ENCODE measurements at regions of chr22 and their contacts with region 1.

Region 1: GRCh38 chr22:33302049-33302545 is 243.9 kb upstream of the SYN3 start:
- DNase-seq: peak; percentile 91
- H3K4me3 ChIP-seq: peak overlapping the region; percentile 10
- H3K27ac ChIP-seq: peak overlapping the region; percentile 100
- H3K4me1 ChIP-seq: peaks cover 65% of the 10 kb centered on the region
- CTCF ChIP-seq: peak; percentile 99

Region 2: DNA sequence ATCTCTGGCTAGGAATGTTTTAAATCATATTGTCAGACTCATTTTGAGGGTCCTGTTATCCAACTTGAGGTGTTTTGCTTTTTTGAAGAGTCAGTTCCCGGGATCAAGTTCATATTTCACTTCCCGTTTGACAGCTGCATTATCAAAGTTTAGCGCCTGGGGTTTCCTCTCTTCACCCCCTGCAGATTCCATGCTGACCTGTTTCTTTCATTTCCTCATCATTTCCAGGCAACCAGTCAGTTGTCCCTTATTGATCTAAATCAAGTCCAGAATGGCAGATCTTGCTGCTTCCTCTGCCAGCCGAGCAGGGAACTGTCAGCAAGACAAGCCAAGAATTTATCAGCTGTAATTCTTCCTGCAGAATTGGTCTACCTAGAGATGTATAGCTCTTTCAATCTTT is 46.3 kb before region 1 on chr22:
- CTCF ChIA-PET with region 1: interaction called, 3 read pairs
- POLR2A ChIA-PET with region 1: interaction called, 11 read pairs
- intact Hi-C with region 1: no loop called
- DNase-seq: peak; percentile 62
- H3K4me3 ChIP-seq: peak overlapping the region; percentile 35
- H3K27ac ChIP-seq: peak overlapping the region; percentile 55
- H3K4me1 ChIP-seq: peaks cover 55% of the 10 kb centered on the region
- CTCF ChIP-seq: no peak

Region 3: DNA sequence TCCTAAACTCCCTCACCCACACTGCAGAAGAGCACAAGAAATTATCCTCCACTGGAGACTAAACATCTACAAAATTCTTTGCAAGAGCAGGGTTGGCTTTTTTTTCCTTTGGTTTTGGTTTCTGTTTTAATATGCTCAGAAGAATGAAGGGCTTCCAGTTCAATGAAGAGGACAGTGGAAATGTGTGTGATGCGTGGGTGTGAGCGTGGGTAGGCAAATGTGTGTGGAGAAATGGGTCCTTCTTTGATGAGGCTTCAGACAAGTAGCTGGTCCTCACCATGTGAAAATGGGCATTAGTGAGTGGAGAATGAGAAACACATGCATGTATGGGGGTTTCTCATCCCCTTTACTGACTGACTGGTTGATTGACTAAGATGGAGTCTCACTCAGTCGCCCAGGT is 19.4 kb after region 1 on chr22:
- CTCF ChIA-PET with region 1: interaction called, 13 read pairs
- POLR2A ChIA-PET with region 1: interaction called, 12 read pairs
- intact Hi-C with region 1: loop called (anchors 2 kb)
- DNase-seq: no peak
- H3K4me3 ChIP-seq: peak overlapping the region; percentile 29
- H3K27ac ChIP-seq: peak overlapping the region; percentile 74
- H3K4me1 ChIP-seq: peaks cover 66% of the 10 kb centered on the region
- CTCF ChIP-seq: no peak

Region 4: GRCh38 chr22:33467620-33468095 is 165.6 kb after region 1 on chr22:
- CTCF ChIA-PET with region 1: no interaction called
- POLR2A ChIA-PET with region 1: no interaction called
- intact Hi-C with region 1: no loop called
- DNase-seq: no peak
- H3K4me3 ChIP-seq: no peak overlapping the region
- H3K27ac ChIP-seq: no peak overlapping the region
- H3K4me1 ChIP-seq: peaks cover 5% of the 10 kb centered on the region
- CTCF ChIP-seq: no peak

Region 5: DNA sequence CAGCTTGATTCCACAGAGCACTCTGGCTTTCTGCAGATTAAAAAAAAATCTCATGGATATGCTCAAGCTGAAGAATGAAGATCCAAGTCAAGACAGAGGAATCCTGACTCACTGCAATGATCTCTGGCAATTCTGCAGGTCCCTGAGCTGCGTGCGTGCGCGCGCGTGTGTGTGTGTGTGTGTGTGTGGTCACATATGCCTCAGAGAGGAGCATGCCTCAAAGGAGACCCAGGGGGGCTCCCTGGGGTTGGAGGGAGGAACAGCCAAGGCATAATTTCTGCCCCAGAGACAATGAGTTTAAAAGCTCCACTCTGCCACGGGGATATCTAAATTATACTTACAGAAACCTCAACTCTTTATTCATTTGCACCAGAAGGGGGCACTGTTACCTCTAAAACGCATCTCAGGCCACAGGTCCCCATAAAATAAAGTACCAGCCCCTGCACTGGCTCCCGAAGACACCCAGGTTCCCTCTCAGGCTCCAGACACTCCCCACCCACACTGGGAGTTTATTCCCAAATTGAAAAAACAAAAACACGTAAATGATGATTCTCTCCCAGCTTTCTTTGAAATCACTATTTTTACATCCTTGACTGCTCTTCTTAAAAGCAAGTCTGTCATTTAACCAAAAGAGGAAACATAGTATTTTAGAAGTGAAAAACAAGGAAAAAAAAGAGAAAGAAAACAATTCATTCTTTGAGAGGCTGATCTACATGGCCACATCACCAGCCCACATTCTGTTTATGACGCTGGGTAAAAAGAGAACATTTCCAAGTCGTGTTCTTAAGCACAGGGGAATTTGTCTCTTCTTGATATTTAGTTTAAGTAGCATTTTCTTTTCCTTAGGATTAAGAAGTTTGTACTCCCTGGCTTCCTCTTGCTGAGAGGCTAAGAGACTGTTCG is 217.2 kb after region 1 on chr22:
- CTCF ChIA-PET with region 1: interaction called, 10 read pairs
- POLR2A ChIA-PET with region 1: interaction called, 5 read pairs
- intact Hi-C with region 1: loop called (anchors 1 kb)
- DNase-seq: peak; percentile 84
- H3K4me3 ChIP-seq: no peak overlapping the region
- H3K27ac ChIP-seq: peak overlapping the region; percentile 57
- H3K4me1 ChIP-seq: peaks cover 40% of the 10 kb centered on the region
- CTCF ChIP-seq: peak; percentile 90

Region 6: DNA sequence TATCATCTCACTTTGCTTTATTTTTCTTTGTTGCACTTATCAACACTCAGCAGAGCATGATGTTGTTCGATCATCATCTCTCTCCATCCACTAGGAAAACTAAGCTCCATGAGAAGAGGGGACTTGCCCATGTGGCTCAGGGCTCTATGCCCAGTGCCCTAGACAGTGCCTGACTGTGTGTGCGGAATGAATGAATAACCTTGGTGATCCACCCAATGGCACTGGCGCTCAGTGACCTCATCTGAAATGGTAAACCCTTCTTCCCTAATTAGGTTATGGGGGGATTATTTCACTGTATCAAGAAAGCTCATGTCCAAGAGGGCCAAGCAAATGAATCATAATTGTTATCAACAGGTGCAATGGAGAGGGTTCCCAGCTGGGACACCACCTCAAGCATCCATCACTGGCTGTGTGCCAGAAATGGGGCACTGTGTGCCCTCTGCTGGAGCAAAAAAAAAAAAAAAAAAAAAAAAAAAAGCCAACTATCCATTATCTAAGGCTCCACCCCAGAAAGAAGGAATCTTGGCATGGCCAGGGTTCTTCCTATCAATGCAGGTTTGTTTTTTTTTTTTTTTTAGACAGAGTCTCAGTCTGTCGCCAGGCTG is 445.6 kb after region 1 on chr22:
- CTCF ChIA-PET with region 1: no interaction called
- POLR2A ChIA-PET with region 1: no interaction called
- intact Hi-C with region 1: loop called (anchors 2 kb)
- DNase-seq: peak; percentile 58
- H3K4me3 ChIP-seq: no peak overlapping the region
- H3K27ac ChIP-seq: no peak overlapping the region
- H3K4me1 ChIP-seq: peaks cover 16% of the 10 kb centered on the region
- CTCF ChIP-seq: peak; percentile 36

Region 7: DNA sequence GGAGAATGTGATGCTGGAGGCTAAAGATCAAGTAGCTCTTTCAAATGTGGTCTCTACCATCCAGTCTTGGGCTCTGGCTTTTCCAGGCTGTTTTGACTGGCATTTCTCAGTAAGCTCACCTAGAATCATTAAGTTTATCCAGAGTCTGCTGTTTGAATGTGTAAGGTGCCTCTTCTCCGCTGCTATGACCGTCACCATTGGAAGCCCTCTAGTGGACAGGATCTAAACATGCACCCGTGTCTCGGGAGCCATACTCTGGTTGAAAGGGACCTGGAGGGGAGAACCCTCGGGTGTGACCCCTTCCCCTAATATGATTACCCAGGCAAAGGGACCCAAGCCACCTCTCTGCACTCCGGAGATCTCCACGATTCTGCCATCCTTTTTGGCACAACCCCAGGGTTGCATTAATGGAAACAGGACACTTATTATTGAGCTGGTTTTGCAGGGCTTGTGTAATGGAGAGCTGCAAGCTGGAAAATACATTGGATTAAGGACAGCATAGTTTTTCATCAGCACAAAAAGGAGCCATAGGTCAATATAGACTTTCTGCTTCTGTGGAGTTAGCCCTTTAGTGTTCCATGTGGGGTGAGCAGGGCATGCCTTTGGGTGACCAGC is 809.2 kb after region 1 on chr22:
- CTCF ChIA-PET with region 1: no interaction called
- POLR2A ChIA-PET with region 1: no interaction called
- intact Hi-C with region 1: loop called (anchors 1 kb)
- DNase-seq: peak; percentile 50
- H3K4me3 ChIP-seq: no peak overlapping the region
- H3K27ac ChIP-seq: no peak overlapping the region
- H3K4me1 ChIP-seq: no peaks in the 10 kb centered on the region
- CTCF ChIP-seq: peak; percentile 87

Measured in OCI-LY7 (cell line).